GM13977 (cell line): ENCODE measurements at regions of chr19 and their contacts with region 1.

Region 1: DNA sequence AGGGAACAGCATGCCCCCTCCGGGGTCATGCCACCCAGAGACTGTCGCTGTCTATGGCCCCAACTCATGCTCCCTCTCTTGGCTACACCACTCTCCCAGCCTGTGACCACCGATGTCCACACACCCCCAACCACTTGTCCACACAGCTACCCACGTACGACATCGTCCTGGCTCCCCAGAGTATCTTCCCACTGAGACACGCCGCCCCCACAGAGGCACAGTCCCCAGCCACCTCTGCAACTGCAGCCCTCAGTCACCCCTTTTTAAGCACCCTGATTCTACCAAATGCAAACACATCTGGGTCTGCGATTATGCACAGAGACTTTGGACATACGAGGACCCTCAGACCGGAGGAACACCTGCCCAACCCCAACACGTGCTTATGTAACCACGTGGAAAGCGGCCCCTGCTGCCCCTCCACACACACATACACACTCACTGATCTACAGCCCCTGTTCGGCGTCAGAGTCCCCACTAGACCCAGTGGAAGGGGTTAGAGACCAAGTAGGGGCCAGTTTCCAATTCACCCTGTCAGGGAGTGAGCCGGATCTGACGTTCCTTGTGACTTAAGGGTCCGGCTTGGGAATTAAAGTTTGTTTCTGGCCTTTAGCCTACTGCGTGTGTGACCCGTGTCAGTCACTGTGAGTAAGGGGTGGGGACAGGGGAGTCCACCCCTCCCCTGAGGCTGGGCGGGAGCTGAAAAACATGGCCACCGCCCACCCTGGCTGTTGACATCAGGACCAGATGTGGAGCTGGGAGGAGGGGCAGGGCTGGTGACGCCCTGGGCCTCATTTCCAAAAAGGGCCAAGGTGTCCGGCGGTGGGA is 11.9 kb upstream of the AXL start:
- DNase-seq: no peak
- CTCF ChIP-seq: no peak

Region 2: DNA sequence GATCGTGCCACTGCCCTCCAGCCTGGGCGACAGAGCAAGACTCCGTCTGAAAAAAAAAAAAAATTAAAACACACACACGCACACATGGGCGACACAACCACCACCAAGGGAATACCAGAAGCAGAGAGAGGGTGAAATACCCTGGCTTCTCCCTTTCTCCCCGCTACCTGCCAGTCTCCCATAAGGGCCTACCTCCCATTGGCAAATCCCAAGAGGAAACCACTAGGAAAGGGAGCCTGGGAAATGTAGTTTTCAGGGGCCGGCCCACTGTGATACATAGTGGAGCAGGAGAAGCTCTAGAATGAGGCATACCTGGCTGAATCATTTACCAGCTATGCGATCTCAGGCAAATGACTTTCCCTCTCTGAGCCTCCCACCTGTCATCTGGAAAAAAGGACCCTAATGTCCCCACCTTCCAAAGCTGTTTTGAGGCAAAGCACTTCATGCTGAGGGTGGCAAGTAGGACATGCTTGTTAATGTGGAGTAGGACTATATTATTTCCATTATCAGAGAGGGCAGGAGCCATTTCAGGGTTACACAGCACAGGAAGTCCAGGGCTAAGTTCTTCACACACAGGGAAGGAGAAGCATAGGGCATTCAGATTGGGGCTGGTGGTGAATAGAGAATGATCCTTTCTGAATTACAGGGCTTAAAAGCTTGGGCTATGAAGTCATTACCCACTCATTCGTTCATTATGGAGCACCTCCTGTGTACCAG is 42.7 kb after region 1 on chr19:
- in situ Hi-C with region 1: loop called (anchors 10 kb)
- DNase-seq: no peak
- CTCF ChIP-seq: no peak

Region 3: GRCh38 chr19:41310033-41310758 is 103.1 kb after region 1 on chr19 and contains the start of gene CCDC97:
- in situ Hi-C with region 1: loop called (anchors 10 kb)
- DNase-seq: peak; percentile 94
- CTCF ChIP-seq: no peak